ENCODE measurements at regions of chr9 and their contacts with region 1.

Region 1: GRCh38 chr9:137029058-137029936 is 1.3 kb upstream of the ABCA2 start:
- DNase-seq: peak; percentile 84
- H3K4me3 ChIP-seq: peak overlapping the region in 3 of 4 donors; percentile 59 to 67 (median 63)
- H3K27ac ChIP-seq: peak overlapping the region in 2 of 4 donors; percentile 3 to 61
- H3K4me1 ChIP-seq: peaks cover 0 to 36% (median 35%) of the 10 kb centered on the region in 4 donors
- H3K27me3 ChIP-seq: peaks cover 0 to under 1% (median 0%) of the 10 kb centered on the region in 3 donors
- CTCF ChIP-seq: peak; percentile 68 to 93 (median 86)
- EP300 ChIP-seq: no peak
- POLR2A ChIP-seq: no peak

Region 2: GRCh38 chr9:136996361-136997281 is 32.7 kb before region 1 on chr9 and contains the start of gene CLIC3:
- intact Hi-C with region 1: loop called (anchors 2 kb)
- DNase-seq: no peak
- H3K4me3 ChIP-seq: no peak within 1 kb of the TSS
- H3K27ac ChIP-seq: no peak within 1 kb of the TSS
- H3K4me1 ChIP-seq: peaks cover 0 to 37% (median 33%) of the 10 kb centered on the region in 4 donors
- H3K27me3 ChIP-seq: peaks cover 26 to 58% (median 44%) of the 10 kb centered on the region in 3 donors
- CTCF ChIP-seq: no peak
- EP300 ChIP-seq: no peak
- POLR2A ChIP-seq: no peak
- total RNA-seq, gene CLIC3: 1.4 TPM in 1 of 4 donors, not detected in the others

Region 3: DNA sequence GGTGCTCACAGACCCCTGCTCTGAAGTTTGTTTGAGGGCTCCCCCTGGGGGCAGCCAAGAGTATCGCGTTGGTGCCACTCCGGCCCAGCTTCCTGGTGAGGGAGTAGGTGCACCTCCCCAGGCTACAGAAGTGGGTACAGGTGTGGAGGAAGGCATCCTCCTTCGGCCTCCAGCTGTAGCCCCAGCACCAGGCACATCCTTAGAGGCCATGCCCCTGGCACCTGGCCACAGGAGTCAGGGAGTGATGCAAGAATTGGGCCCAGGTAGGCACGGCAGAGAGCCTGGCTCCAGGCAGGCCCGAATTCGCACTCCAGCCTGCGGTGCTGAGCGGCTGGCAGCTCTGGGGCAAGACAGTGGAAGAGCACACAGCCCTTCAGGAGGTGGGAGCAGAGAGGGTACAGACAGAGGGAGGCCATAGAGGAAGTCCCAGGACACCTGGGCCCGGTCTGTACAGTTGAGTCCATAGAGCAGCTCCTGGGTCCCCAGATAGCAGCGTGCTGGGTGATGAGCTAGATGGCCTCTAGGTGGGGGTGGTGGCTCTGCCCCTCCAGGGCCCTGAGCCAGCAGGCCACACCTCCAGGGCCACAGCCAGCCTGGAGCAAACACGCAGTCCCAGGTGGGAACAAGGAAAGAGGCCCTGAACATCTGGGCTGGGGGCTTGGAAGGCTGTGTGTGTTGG is 38.7 kb after region 1 on chr9:
- intact Hi-C with region 1: loop called (anchors 5 kb)
- DNase-seq: peak; percentile 88
- H3K4me3 ChIP-seq: no peak overlapping the region
- H3K27ac ChIP-seq: no peak overlapping the region
- H3K4me1 ChIP-seq: peaks cover 0 to 26% (median 20%) of the 10 kb centered on the region in 4 donors
- H3K27me3 ChIP-seq: peaks cover 18 to 36% (median 32%) of the 10 kb centered on the region in 3 donors
- CTCF ChIP-seq: peak; percentile 50 to 86 (median 77)
- EP300 ChIP-seq: no peak
- POLR2A ChIP-seq: no peak

Region 4: GRCh38 chr9:137086531-137087408 is 57.5 kb after region 1 on chr9 and contains the start of gene MAN1B1:
- intact Hi-C with region 1: no loop called
- DNase-seq: peak; percentile 99
- H3K4me3 ChIP-seq: peak within 1 kb of the TSS; percentile 63 to 88 (median 82)
- H3K27ac ChIP-seq: peak within 1 kb of the TSS; percentile 92 to 97 (median 96)
- H3K4me1 ChIP-seq: peaks cover 0 to 40% (median 29%) of the 10 kb centered on the region in 4 donors
- H3K27me3 ChIP-seq: peaks cover 0 to 5% (median 0%) of the 10 kb centered on the region in 3 donors
- CTCF ChIP-seq: no peak
- EP300 ChIP-seq: peak in 1 of 4 donors; percentile 38
- POLR2A ChIP-seq: peak; percentile 52 to 78
- total RNA-seq, gene MAN1B1: 27.8 to 34.9 (median 28.7) TPM

Region 5: DNA sequence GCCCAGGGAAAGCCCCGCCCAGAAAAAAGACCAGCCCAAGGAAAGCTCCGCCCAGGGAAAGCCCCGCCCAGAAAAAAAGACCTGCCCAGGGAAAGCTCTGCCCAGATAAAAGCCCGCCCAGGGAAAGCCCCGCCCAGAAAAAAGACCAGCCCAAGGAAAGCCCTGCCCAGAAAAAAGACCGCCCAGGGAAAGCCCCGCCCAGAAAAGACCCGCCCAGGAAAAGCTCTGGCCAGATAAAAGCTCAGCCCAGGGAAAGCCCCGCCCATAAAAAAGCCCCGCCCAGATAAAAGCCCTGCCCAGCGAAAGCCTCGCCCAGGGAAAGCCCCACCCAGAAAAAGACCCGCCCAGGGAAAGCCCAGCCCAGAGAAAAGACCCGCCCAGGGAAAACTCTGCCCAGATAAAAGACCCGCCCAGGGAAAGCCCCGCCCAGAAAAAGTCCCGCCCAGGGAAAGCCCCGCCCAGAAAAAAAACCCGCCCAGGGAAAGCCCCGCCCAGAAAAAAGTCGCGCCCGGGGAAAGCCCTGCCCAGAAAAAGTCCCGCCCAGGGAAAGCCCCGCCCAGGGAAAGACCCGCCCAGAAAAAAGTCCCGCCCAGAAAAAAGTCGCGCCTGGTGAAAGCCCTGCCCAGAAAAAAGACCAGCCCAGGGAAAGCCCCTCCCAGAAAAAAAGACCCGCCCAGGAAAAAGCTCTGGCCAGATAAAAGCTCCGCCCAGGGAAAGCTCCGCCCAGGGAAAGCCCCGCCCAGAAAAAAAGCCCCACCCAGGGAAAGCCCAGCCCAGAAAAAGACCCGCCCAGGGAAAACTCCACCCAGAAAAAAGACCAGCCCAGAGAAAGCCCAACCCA is 121.5 kb after region 1 on chr9:
- intact Hi-C with region 1: no loop called
- DNase-seq: no peak
- H3K4me3 ChIP-seq: no peak overlapping the region
- H3K27ac ChIP-seq: no peak overlapping the region
- H3K4me1 ChIP-seq: peaks cover 0 to 5% (median 0%) of the 10 kb centered on the region in 4 donors
- H3K27me3 ChIP-seq: peaks cover 3 to 67% (median 40%) of the 10 kb centered on the region in 3 donors
- CTCF ChIP-seq: no peak
- EP300 ChIP-seq: no peak
- POLR2A ChIP-seq: no peak